ENCODE measurements at regions of chr5 and their contacts with region 1.

Region 1: GRCh38 chr5:14545308-14545707 is 36.3 kb upstream of the OTULINL start:
- DNase-seq: no peak

Region 2: GRCh38 chr5:12730354-12730753 is 1815.0 kb before region 1 on chr5:
- intact Hi-C with region 1: no loop called
- DNase-seq: no peak

Region 3: DNA sequence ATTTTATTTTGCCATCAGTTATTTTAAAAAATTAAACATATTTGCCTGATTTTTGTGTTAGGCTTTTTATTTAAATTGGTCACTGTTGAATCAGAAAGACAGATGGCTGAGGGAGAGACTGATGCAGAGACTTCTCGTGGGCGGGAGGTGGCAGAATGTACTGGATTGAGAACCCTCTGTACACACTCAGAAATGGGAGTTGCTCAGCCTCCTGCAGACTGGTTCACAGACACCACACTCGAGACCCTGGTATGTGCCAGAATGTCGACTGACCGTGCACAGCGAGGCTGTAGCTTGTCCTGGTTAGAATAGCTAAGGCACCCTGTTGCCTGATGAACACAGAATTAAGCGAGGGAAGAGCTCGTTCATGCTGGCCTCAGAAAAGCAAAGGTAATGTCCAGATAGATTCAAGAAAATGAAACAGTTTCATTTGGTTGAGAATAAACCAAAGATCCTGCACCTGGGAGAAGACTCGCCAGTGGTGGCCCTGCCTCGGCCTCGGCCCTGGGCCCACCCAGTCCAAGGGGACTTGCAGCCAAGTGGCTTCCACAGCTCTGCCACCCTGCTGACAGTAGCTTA is 35.1 kb before region 1 on chr5:
- intact Hi-C with region 1: loop called in 1 of 2 experiments (anchors 2 kb)
- DNase-seq: no peak

Measured in posterior vena cava (tissue), 2 donors.